CD8-positive, alpha-beta T cell (primary cell): ENCODE measurements at regions of chr3 and their contacts with region 1.

Region 1: DNA sequence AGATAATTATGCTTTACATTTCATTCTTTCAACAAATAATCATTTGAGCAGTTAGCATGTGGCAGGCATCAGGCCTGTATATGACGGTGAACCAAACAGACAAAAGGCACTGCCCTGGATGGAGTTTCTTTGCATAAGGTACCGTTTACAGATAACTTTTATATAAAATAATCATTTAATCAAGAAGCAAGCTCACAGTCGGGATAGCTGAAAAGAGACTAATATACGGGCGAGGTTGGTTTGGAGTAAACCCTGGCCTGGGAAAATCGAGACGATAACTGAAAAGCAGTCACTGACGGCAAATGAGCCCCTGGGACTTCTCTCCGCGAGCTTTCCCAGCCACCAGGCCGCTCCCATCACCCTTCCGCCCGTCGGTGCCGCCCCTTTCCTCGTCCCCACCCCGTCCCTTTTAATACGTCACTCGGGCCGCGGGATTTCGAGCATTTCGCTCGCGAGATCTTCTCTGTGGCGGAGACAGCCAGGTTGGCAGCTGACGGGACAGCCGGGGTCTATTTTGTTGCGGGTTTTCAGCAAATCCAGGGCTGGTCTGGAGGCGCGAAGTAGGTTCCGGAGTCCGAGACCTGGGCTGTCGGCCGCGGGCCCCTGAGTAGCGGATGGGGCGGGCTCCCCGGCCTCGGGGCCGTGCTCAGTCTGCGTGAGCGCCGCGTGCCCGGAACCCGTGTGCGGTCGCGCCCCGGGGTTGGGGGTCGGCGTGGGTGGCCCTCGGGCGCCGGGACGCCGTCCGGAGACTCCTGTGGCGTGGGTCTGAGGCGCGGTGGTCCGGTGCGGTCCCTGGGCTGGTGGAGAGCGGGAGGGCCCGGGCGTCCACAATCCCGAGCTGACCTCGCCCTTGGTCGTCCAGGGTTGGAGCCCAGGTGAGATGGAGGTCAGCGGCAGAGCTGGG is at the start of gene NMD3:
- DNase-seq: peak; percentile 84 to 94 (median 92)
- ATAC-seq: peak; percentile 97
- H3K4me3 ChIP-seq: peak within 1 kb of the TSS; percentile 85 to 95
- H3K4me3 Mint-ChIP-seq: peak within 1 kb of the TSS; percentile 87
- H3K27ac ChIP-seq: peak within 1 kb of the TSS; percentile 78 to 95
- H3K27ac Mint-ChIP-seq: peak within 1 kb of the TSS; percentile 95
- H3K4me1 ChIP-seq: peaks cover 25% of the 10 kb centered on the region
- H3K4me1 Mint-ChIP-seq: peaks cover 38% of the 10 kb centered on the region
- H3K27me3 ChIP-seq: no peaks in the 10 kb centered on the region
- H3K27me3 Mint-ChIP-seq: peaks cover 3% of the 10 kb centered on the region
- CTCF ChIP-seq: no peak
- total RNA-seq, gene NMD3: 53.2 to 54.6 TPM

Region 2: DNA sequence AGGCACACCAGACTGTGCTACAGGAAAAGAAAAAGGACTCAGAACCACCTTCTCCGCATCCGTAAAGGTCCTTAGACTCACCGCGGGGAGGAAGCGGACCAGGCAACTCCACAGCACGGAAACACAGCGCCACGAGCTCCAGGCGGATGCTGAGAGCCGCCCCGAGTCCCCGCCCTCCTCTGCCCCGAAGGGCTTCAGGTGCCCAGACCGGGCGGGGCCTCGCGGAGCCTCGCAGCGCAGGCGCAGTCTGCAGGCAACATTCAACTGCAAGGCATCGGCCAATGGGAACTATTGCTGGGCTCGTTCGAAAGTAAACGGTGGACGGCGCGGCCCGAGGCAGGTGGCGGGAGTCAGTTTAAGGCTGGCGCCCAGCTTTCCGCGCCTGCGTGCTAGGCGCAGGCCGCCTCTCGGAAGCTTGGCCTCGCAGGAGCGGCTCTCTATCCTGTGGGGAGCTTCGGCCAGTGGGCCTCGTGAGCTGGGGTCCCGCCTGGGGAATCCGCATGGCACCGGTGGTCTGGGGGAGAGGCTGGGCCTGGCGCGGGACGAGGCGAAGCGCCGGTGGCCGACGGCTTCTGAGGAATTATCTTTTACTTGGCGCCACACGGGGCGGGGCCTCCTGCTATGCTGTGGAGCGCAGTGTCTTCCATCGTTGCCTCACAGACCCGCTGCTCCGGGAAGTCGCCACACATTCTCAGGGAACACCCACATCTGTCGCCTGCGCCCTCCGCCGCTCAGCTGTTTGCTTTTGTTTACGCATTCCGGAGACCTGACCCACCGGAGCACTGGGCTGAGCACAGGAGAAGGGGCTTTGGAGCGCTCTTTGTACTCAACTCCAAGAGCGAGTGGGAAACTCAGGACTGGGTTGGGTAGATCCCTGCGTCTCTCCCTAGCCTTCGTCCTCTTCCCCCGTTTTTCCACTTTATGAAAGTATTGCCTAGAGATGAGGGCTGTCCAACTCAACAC is 771.2 kb before region 1 on chr3 and contains the start of gene TRIM59:
- CTCF ChIA-PET with region 1: no interaction called
- POLR2A ChIA-PET with region 1: no interaction called
- intact Hi-C with region 1: loop called (anchors 5 to 10 kb)
- DNase-seq: peak; percentile 92 to 99 (median 95)
- ATAC-seq: peak; percentile 96
- H3K4me3 ChIP-seq: peak within 1 kb of the TSS; percentile 80 to 91
- H3K4me3 Mint-ChIP-seq: peak within 1 kb of the TSS; percentile 95
- H3K27ac ChIP-seq: peak within 1 kb of the TSS; percentile 60 to 85
- H3K27ac Mint-ChIP-seq: peak within 1 kb of the TSS; percentile 93
- H3K4me1 ChIP-seq: peaks cover 22% of the 10 kb centered on the region
- H3K4me1 Mint-ChIP-seq: peaks cover 38% of the 10 kb centered on the region
- H3K27me3 ChIP-seq: no peaks in the 10 kb centered on the region
- H3K27me3 Mint-ChIP-seq: no peaks in the 10 kb centered on the region
- CTCF ChIP-seq: no peak
- total RNA-seq, gene TRIM59: 15.0 to 15.5 TPM

Region 3: DNA sequence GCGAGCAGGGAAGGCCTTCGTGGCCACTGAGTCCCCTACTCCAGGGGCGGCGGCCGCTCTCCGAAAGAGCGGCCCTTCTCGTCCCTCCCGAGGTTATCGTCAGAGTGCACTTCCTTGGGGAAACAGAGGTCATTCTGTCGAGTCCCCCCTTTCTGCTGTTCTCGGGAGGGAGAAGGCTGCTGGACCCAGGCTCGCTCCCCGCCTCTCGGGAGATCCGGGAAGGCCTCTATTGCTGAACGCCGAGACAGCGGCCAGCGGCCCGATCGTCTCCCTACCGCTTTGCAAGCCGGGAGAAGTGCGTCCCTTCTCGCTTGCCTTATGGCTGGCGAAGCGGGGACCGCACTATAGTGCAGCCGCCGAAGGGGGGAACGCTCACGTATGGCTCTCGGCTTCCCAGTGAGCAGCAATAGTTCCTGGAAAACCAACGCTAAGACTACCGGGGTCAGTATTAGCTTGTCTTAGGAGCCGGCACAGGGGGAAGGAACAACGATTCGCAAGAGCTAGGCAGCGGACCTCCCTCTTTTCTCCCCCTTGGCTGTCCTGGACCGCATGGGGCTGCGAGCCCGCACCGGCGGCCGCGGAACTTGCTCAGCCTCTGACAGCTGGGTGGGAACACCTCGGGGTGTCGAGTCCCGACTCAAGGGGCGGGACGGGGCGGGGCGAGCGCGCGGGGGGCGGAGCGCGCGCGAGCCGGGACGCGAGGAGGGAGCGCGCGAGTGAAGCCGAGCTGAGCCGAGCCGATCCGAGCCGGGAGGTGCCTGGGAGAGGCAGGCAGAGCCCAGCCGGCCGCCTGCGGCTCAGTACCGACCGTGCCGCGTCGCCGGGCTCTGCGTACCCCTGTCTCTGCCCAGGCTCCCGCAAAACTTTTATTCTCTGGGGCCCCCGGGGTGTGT is 466.0 kb before region 1 on chr3:
- CTCF ChIA-PET with region 1: no interaction called
- POLR2A ChIA-PET with region 1: interaction called, 4 read pairs
- intact Hi-C with region 1: loop called (anchors 1 to 2 kb)
- DNase-seq: peak; percentile 79 to 95 (median 89)
- ATAC-seq: peak; percentile 85
- H3K4me3 ChIP-seq: peak overlapping the region; percentile 79 to 90
- H3K4me3 Mint-ChIP-seq: peak overlapping the region; percentile 90
- H3K27ac ChIP-seq: peak overlapping the region; percentile 66 to 84
- H3K27ac Mint-ChIP-seq: peak overlapping the region; percentile 75
- H3K4me1 ChIP-seq: peaks cover 26% of the 10 kb centered on the region
- H3K4me1 Mint-ChIP-seq: peaks cover 33% of the 10 kb centered on the region
- H3K27me3 ChIP-seq: no peaks in the 10 kb centered on the region
- H3K27me3 Mint-ChIP-seq: peaks cover 13% of the 10 kb centered on the region
- CTCF ChIP-seq: no peak

Region 4: GRCh38 chr3:160801386-160802118 is 419.6 kb before region 1 on chr3:
- CTCF ChIA-PET with region 1: no interaction called
- POLR2A ChIA-PET with region 1: no interaction called
- intact Hi-C with region 1: no loop called
- DNase-seq: peak in 3 of 9 experiments; percentile 14 to 62 (median 33)
- ATAC-seq: no peak
- H3K4me3 ChIP-seq: peak overlapping the region in 1 of 2 experiments; percentile 9
- H3K4me3 Mint-ChIP-seq: peak overlapping the region; percentile 5
- H3K27ac ChIP-seq: peak overlapping the region in 1 of 2 experiments; percentile 66
- H3K27ac Mint-ChIP-seq: no peak overlapping the region
- H3K4me1 ChIP-seq: no peaks in the 10 kb centered on the region
- H3K4me1 Mint-ChIP-seq: peaks cover 9% of the 10 kb centered on the region
- H3K27me3 ChIP-seq: no peaks in the 10 kb centered on the region
- H3K27me3 Mint-ChIP-seq: no peaks in the 10 kb centered on the region
- CTCF ChIP-seq: no peak